Heart left ventricle (tissue), 16 donors: ENCODE measurements at regions of chr14 and their contacts with region 1.

Region 1: DNA sequence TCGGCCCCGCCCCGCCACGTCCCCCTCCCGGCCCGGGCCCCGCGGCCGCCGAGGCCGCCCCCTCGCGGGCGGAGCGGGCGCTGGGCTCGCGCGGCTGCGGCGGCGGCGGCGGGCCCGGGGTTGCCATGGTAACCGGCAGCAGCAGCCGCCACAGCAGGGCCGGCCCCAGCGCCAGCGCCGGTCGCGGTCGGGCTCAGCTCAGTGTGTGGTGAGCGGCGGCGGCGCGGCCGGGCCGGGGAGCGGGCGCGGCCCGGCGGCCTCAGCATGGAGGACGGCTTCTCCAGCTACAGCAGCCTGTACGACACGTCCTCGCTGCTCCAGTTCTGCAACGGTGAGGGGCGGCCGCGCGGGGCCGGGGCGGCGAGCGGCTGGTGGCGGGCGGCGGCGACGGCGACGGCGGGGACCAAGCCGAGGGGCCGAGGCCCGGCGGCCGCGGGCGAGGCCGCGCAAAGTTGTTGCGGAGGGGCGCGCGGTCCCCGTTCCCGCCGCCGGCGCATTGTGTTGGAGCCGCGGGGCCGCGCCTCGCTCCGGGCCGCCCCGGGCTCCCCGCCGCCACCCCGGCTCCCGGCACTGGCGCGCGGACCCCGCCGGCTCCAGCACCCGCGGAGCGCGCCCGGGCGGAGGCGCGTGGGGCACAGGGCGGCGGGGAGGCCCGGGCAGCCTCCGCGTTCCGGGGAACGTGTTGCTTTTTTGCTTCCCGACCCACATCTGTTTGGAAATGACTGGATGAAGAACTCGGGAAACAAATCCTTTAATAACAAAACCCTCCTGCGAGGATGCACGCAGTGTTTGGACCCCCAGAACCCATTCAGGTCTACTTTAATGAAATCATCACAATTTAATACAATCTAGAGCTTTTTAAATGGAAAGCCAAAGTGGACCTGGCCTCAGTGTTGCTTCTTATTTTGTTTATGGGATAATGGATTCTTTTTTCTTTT is at the start of gene EML1:
- DNase-seq: peak; percentile 88 to 93 (median 89)
- ATAC-seq: peak; percentile 69 to 93 (median 86)
- H3K4me3 ChIP-seq: peak within 1 kb of the TSS; percentile 17 to 73 (median 60)
- H3K27ac ChIP-seq: peak within 1 kb of the TSS; percentile 50 to 94 (median 84)
- H3K4me1 ChIP-seq: peaks cover 0 to 51% (median 31%) of the 10 kb centered on the region in 12 donors
- H3K27me3 ChIP-seq: peaks cover 0 to 15% (median 0%) of the 10 kb centered on the region in 9 donors
- CTCF ChIP-seq: peak in 1 of 12 donors; percentile 7
- POLR2A ChIP-seq: no peak
- total RNA-seq, gene EML1: 26.4 to 49.7 (median 41.5) TPM

Region 2: GRCh38 chr14:99234961-99235571 is 558.4 kb before region 1 on chr14:
- intact Hi-C with region 1: no loop called
- DNase-seq: no peak
- ATAC-seq: no peak
- H3K4me3 ChIP-seq: peak overlapping the region in 1 of 12 donors; percentile 15
- H3K27ac ChIP-seq: peak overlapping the region in 1 of 12 donors; percentile 23
- H3K4me1 ChIP-seq: no peaks in the 10 kb centered on the region
- H3K27me3 ChIP-seq: peaks cover 3 to 77% (median 16%) of the 10 kb centered on the region in 9 donors
- CTCF ChIP-seq: no peak
- POLR2A ChIP-seq: no peak

Region 3: DNA sequence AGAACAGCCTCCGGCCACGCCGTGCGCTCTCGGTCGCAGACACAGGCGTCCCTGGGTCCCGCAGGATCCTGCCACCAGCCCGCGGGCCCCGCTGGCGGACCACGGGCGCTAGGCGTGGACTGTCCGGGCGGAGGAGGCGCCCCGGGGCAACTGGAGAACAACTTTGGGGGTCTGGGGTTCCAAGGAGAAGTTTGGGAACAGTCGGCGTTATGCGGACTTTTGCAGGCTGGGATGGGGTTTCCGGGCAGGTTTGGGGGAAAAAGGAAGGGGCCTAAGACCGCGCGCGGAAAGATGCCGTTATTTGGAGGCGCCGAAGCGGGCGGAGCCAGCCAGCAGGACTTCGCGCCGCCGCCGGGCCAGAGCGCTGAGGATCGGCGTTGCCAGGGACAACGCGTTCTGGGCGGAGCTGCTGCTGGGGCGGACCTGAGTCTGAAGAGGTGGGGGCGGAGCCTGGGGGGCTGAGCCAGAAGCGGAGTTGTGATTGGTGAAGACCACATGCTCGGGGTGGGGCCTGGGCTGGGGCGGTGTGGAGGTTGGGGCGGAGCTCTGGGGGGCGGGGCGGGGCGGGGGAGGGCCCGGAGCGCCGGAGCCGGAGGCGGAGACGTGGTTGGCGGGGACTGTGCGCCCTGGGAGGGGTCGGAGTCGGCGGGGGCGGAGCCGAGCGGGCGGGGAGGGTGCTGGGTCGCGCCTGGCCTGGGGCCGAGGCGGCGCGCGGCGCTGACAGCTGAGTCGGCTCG is 109.7 kb before region 1 on chr14 and contains the start of gene CYP46A1:
- intact Hi-C with region 1: loop called in 1 of 10 experiments (anchors 2 kb)
- DNase-seq: peak; percentile 100
- ATAC-seq: peak; percentile 97 to 99 (median 98)
- H3K4me3 ChIP-seq: peak within 1 kb of the TSS; percentile 58 to 96 (median 82)
- H3K27ac ChIP-seq: peak within 1 kb of the TSS; percentile 14 to 92 (median 80)
- H3K4me1 ChIP-seq: peaks cover 0 to 24% (median 13%) of the 10 kb centered on the region in 12 donors
- H3K27me3 ChIP-seq: peaks cover 0 to 6% (median 0%) of the 10 kb centered on the region in 9 donors
- CTCF ChIP-seq: peak in 1 of 12 donors; percentile 3
- POLR2A ChIP-seq: peak in 1 of 2 donors; percentile 28
- total RNA-seq, gene CYP46A1: 2.3 to 8.0 (median 3.5) TPM

Region 4: GRCh38 chr14:99729991-99730868 is 63.3 kb before region 1 on chr14:
- intact Hi-C with region 1: loop called (anchors 2 to 10 kb)
- DNase-seq: peak; percentile 61 to 82 (median 70)
- ATAC-seq: peak in 3 of 4 donors; percentile 39 to 73 (median 51)
- H3K4me3 ChIP-seq: peak overlapping the region; percentile 37 to 69 (median 58)
- H3K27ac ChIP-seq: peak overlapping the region in 6 of 12 donors; percentile 26 to 66 (median 42)
- H3K4me1 ChIP-seq: peaks cover 0 to 57% (median 28%) of the 10 kb centered on the region in 12 donors
- H3K27me3 ChIP-seq: peaks cover 0 to 7% (median 0%) of the 10 kb centered on the region in 9 donors
- CTCF ChIP-seq: peak; percentile 60 to 97 (median 94)
- POLR2A ChIP-seq: no peak

Region 5: GRCh38 chr14:99737451-99737951 is 56.0 kb before region 1 on chr14:
- intact Hi-C with region 1: loop called in 6 of 10 experiments (anchors 2 to 10 kb)
- DNase-seq: peak; percentile 76 to 87 (median 84)
- ATAC-seq: peak; percentile 73 to 86 (median 82)
- H3K4me3 ChIP-seq: peak overlapping the region; percentile 39 to 89 (median 66)
- H3K27ac ChIP-seq: peak overlapping the region; percentile 76 to 95 (median 88)
- H3K4me1 ChIP-seq: peaks cover 0 to 83% (median 44%) of the 10 kb centered on the region in 12 donors
- H3K27me3 ChIP-seq: peaks cover 0 to 9% (median 0%) of the 10 kb centered on the region in 9 donors
- CTCF ChIP-seq: no peak
- POLR2A ChIP-seq: no peak

Region 6: GRCh38 chr14:99755629-99756603 is 37.6 kb before region 1 on chr14:
- intact Hi-C with region 1: loop called in 1 of 10 experiments (anchors 5 kb)
- DNase-seq: peak; percentile 79 to 92 (median 89)
- ATAC-seq: peak; percentile 82 to 91 (median 88)
- H3K4me3 ChIP-seq: no peak overlapping the region
- H3K27ac ChIP-seq: peak overlapping the region in 6 of 12 donors; percentile 15 to 61 (median 34)
- H3K4me1 ChIP-seq: peaks cover 12 to 73% (median 48%) of the 10 kb centered on the region in 12 donors
- H3K27me3 ChIP-seq: no peaks in the 10 kb centered on the region
- CTCF ChIP-seq: no peak
- POLR2A ChIP-seq: no peak

Region 7: DNA sequence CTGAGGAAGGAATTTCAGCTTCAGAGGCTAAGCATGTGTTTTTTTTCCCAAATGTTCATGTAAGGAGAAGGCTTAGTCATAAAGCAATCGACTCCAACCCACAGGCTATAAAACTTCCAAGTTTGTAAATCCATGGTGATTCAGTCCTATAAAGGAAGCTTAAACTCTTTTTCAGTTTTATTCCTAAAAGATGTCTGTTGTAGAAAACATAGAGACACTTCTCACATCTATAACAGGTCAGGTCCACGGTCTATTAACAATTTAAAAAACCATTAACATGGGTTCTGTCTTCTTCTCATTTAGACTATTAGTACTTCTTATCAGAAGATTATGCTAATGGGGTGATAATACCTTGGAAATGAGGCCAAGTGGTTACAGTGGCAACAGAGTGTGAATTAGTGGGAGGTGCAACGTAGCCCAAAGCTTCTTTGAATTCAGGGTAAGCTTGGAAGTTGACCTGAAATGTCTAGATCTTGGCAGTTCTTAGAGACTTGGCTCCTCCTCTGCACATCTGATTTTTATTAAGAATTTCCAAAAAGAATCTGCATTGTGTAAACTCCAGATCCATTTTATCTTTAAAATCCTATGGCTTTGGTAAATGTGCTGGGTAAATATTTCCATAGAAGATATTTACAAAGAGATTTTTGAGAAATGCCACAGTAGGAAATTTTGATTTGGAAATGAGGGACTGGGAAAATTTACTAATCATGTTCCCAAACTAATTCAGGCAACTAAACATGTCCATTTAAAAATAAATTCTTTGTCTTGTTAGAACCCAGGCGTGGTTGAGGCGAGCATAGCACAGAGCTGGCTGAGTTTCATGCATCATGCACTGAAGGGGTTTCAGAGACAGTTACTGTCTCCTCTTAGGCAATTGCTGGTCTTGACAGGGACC is 86.2 kb after region 1 on chr14:
- intact Hi-C with region 1: loop called in 7 of 10 experiments (anchors 2 to 10 kb)
- DNase-seq: no peak
- ATAC-seq: peak in 1 of 4 donors; percentile 59
- H3K4me3 ChIP-seq: no peak overlapping the region
- H3K27ac ChIP-seq: peak overlapping the region in 5 of 12 donors; percentile 28 to 67 (median 31)
- H3K4me1 ChIP-seq: peaks cover 0 to 16% (median 4%) of the 10 kb centered on the region in 12 donors
- H3K27me3 ChIP-seq: no peaks in the 10 kb centered on the region
- CTCF ChIP-seq: no peak
- POLR2A ChIP-seq: no peak